Mammary epithelial cell (primary cell): ENCODE measurements at regions of chr7 and their contacts with region 1.

Region 1: DNA sequence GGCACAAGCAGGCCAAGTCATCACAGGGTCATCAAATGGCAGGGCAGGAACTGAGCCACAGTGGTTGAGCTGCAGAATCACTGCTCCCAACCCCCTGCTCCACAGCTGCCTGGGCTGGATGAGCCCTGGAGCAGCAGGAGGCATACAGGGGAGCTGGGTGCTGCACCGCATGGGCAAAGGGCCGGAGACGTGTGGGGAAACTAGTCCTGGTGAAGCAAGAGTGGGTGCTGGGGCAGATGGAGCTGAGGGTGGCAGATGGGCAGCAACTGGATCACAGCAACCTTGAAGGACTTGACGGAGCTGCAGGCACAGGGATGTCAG is 16.0 kb upstream of the VOPP1 start:
- DNase-seq: no peak
- H3K4me3 ChIP-seq: no peak overlapping the region
- H3K27ac ChIP-seq: no peak overlapping the region
- H3K4me1 ChIP-seq: peaks cover 11% of the 10 kb centered on the region
- H3K27me3 ChIP-seq: no peaks in the 10 kb centered on the region
- CTCF ChIP-seq: no peak

Region 2: DNA sequence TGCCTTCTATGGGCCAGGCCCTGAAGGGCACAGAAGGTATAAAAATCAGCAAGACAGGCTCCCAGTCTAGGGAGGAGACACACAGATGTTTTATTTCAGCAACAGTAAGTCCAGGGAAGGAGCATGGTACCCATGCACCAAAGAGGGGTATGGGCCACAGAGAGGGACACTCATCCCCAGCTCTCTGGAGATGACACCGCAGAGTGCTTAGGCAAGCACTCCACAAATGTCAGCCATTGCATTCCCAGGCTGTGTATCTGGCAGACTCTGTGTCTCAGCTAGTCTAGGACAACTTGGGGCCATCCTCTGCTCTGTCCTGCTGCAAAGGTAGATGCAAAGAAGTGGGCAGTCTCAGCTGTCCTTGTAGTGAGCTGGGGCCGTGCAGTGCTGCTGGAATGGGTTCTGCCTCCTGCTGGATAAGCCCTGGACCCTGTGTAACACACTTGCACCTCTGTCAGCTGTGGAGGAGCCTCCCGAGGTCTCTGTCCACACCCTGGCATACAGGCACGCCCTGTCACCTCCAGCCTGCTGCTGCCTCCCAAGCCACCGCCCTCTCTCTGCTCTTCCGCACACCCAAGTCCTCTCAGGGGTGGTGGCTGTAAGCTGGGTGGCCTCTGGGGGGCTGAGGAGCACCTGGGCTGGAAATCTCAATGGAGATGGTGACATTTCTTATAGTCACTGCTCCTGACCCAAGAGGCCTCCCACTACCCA is 73.6 kb before region 1 on chr7:
- CTCF ChIA-PET with region 1: no interaction called
- dilution Hi-C with region 1: loop called (anchors 5 kb)
- in situ Hi-C with region 1: no loop called
- intact Hi-C with region 1: no loop called
- DNase-seq: no peak
- H3K4me3 ChIP-seq: no peak overlapping the region
- H3K27ac ChIP-seq: no peak overlapping the region
- H3K4me1 ChIP-seq: no peaks in the 10 kb centered on the region
- H3K27me3 ChIP-seq: no peaks in the 10 kb centered on the region
- CTCF ChIP-seq: no peak

Region 3: DNA sequence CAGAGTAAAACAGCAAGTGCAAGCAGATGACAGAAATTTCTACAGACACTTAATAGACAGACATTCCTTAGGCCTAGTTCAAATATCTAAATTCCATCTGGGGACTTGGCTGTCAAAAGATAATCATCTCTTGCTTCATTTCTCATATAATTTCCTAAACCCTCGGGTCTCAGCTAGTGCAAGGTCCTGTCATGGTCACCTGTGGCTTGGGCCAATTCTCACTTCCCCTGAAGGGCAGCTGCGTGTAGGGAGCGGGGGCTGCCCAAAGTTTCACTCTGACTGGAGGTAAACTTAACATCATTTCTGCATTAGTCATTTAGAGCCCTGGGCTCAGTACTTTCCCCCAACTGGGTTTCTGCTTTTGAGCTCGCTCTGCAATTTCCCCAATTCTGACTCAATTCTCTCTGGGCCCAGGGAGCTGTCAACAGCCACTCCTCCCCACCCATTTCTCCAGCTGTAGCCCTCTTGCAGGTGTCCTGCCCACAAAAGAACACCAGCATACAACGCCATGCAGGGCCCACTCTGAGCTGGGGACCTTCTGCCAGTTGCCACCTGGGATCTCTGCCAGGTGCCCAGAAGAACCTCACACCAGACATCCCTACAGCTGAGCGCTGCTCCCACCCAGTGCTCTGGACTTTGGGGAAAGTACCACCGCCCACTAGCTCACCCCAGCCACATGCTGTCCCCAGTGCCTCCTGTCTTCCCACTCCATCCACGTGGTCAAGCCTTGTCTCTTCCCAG is 54.0 kb before region 1 on chr7:
- CTCF ChIA-PET with region 1: interaction called, 22 read pairs
- dilution Hi-C with region 1: no loop called
- in situ Hi-C with region 1: no loop called
- intact Hi-C with region 1: no loop called
- DNase-seq: peak; percentile 97
- H3K4me3 ChIP-seq: no peak overlapping the region
- H3K27ac ChIP-seq: peak overlapping the region; percentile 65
- H3K4me1 ChIP-seq: peaks cover 54% of the 10 kb centered on the region
- H3K27me3 ChIP-seq: no peaks in the 10 kb centered on the region
- CTCF ChIP-seq: no peak